K562 (cell line): ENCODE measurements at regions of chr1 and their contacts with region 1.

Region 1: DNA sequence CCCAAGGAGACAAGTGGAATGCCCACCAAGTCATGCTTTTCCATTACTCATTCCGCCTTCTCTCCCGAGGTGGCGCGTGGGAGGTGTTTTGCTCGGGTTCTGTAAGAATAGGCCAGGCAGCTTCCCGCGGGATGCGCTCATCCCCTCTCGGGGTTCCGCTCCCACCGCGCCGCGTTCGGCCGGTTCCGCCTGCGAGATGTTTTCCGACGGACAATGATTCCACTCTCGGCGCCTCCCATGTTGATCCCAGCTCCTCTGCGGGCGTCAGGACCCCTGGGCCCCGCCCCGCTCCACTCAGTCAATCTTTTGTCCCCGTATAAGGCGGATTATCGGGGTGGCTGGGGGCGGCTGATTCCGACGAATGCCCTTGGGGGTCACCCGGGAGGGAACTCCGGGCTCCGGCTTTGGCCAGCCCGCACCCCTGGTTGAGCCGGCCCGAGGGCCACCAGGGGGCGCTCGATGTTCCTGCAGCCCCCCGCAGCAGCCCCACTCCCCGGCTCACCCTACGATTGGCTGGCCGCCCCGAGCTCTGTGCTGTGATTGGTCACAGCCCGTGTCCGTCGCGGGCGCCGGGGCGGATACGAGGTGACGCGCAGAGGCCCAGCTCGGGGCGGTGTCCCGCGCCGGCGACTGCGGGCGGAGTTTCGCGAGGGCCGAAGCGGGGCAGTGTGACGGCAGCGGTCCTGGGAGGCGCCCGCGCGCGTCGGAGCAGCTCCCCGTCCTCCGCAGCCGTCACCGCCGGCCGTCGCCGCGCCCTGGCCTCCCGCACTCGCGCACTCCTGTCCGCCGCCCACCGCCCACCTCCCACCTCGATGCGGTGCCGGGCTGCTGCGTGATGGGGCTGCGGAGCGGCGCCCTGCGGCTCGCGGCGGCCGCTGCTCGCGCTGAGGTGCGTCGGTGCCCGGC is at the start of gene KIF1B:
- DNase-seq: peak; percentile 99 to 100 (median 100)
- ATAC-seq: peak; percentile 99
- H3K4me3 ChIP-seq: peak within 1 kb of the TSS; percentile 70
- H3K27ac ChIP-seq: peak within 1 kb of the TSS; percentile 73
- H3K4me1 ChIP-seq: peaks cover 17 to 23% of the 10 kb centered on the region in 2 experiments
- H3K27me3 ChIP-seq: peaks cover 0 to 17% of the 10 kb centered on the region in 2 experiments; a peak in 2 of 5 replicates
- CTCF ChIP-seq: peak; percentile 94 to 97 (median 96)
- EP300 ChIP-seq: no peak; the same call in none of the 2 replicates
- POLR2A ChIP-seq: peak; percentile 47
- RAD21 ChIP-seq: peak; percentile 79 to 85
- polyA plus RNA-seq, gene KIF1B: 2.8 to 3.1 TPM

Region 2: DNA sequence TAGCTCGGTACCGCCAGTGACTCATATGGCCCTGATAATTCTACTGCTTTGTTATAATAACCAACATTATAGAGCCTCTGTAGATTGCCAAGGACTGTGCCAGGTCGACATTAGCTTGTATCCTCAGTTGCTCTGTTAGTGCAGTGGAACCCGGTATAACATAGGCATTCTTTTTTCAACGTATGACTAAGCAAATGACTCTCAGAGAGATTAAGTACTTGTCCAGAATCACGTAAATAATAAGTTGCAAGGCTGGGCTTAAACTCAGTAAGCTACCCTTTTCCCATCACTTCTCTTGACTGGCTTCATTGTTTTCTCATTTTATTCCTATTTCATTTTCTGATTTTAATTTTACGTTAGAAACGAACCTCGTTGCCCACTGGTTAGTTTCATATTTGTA is 92.3 kb before region 1 on chr1:
- CTCF ChIA-PET with region 1: no interaction called
- POLR2A ChIA-PET with region 1: no interaction called
- in situ Hi-C with region 1: no loop called
- intact Hi-C with region 1: no loop called
- DNase-seq: no peak
- ATAC-seq: no peak
- H3K4me3 ChIP-seq: no peak overlapping the region
- H3K27ac ChIP-seq: no peak overlapping the region
- H3K4me1 ChIP-seq: no peaks in the 10 kb centered on the region
- H3K27me3 ChIP-seq: no peaks in the 10 kb centered on the region
- CTCF ChIP-seq: no peak
- EP300 ChIP-seq: no peak
- POLR2A ChIP-seq: no peak
- RAD21 ChIP-seq: no peak

Region 3: DNA sequence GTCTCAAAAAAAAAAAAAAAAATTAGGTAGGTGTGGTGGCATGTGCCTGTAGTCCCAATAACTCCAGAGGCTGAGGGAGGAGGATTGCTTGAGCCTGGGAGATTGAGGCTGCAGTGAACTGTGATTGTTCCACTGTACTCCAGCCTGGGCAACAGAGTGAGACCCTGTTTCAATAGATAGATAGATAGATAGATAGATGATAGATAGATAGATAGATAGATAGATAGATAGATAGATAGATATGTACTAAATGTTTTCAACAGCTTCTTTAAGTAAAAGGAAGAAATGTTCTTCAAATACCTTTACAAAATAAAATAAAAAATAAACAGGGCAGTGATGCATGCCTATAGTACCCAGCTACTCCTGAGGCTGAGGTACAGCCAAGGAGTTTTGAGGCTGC is 10.0 kb after region 1 on chr1:
- CTCF ChIA-PET with region 1: no interaction called
- POLR2A ChIA-PET with region 1: interaction called, 19 read pairs
- in situ Hi-C with region 1: no loop called
- intact Hi-C with region 1: no loop called
- DNase-seq: no peak
- ATAC-seq: no peak
- H3K4me3 ChIP-seq: no peak overlapping the region
- H3K27ac ChIP-seq: no peak overlapping the region
- H3K4me1 ChIP-seq: no peaks in the 10 kb centered on the region; a peak in 1 of 5 replicates
- H3K27me3 ChIP-seq: no peaks in the 10 kb centered on the region
- CTCF ChIP-seq: no peak
- EP300 ChIP-seq: no peak
- POLR2A ChIP-seq: no peak
- RAD21 ChIP-seq: no peak

Region 4: GRCh38 chr1:10225573-10225972 is 15.4 kb after region 1 on chr1:
- CTCF ChIA-PET with region 1: no interaction called
- POLR2A ChIA-PET with region 1: interaction called, 19 read pairs
- in situ Hi-C with region 1: no loop called
- intact Hi-C with region 1: no loop called
- DNase-seq: no peak
- ATAC-seq: no peak
- H3K4me3 ChIP-seq: no peak overlapping the region
- H3K27ac ChIP-seq: no peak overlapping the region
- H3K4me1 ChIP-seq: no peaks in the 10 kb centered on the region; a peak in 1 of 5 replicates
- H3K27me3 ChIP-seq: no peaks in the 10 kb centered on the region
- CTCF ChIP-seq: no peak
- EP300 ChIP-seq: no peak
- POLR2A ChIP-seq: no peak
- RAD21 ChIP-seq: no peak

Region 5: GRCh38 chr1:10324627-10325026 is 114.5 kb after region 1 on chr1:
- CTCF ChIA-PET with region 1: no interaction called
- POLR2A ChIA-PET with region 1: no interaction called
- in situ Hi-C with region 1: no loop called
- intact Hi-C with region 1: loop called (anchors 5 kb)
- DNase-seq: no peak
- ATAC-seq: no peak
- H3K4me3 ChIP-seq: no peak overlapping the region
- H3K27ac ChIP-seq: no peak overlapping the region
- H3K4me1 ChIP-seq: peaks cover 0 to 9% of the 10 kb centered on the region in 2 experiments; a peak in 2 of 5 replicates
- H3K27me3 ChIP-seq: no peaks in the 10 kb centered on the region
- CTCF ChIP-seq: no peak
- EP300 ChIP-seq: no peak
- POLR2A ChIP-seq: no peak
- RAD21 ChIP-seq: no peak

Region 6: DNA sequence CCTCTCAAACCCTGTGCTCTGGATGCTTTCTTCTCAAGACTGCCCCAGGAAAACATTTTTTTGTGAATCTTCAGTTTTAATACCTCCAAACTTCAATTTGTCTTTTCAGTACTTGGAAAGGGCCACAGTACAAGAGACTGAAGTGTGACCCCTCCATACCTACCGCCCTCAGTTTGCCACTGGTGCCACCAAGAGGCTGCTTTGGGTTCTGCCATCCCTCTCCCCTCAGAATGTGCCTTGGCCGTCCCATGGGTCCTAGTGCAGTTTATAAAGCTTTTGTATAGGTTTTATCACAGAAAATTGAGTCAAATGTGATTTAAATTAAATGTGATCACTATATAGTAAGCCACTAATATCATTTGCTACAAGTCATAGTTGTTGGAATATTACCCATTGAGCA is 127.9 kb after region 1 on chr1:
- CTCF ChIA-PET with region 1: no interaction called
- POLR2A ChIA-PET with region 1: no interaction called
- in situ Hi-C with region 1: no loop called
- intact Hi-C with region 1: loop called (anchors 1 kb)
- DNase-seq: peak; percentile 46 to 63 (median 60)
- ATAC-seq: peak; percentile 91
- H3K4me3 ChIP-seq: no peak overlapping the region
- H3K27ac ChIP-seq: no peak overlapping the region
- H3K4me1 ChIP-seq: peaks cover 0 to 9% of the 10 kb centered on the region in 2 experiments; a peak in 2 of 5 replicates
- H3K27me3 ChIP-seq: no peaks in the 10 kb centered on the region
- CTCF ChIP-seq: peak; percentile 78 to 86 (median 82)
- EP300 ChIP-seq: no peak
- POLR2A ChIP-seq: no peak
- RAD21 ChIP-seq: peak; percentile 47 to 73

Region 7: GRCh38 chr1:11882814-11883538 is 1672.8 kb after region 1 on chr1:
- CTCF ChIA-PET with region 1: no interaction called
- POLR2A ChIA-PET with region 1: no interaction called
- in situ Hi-C with region 1: no loop called
- intact Hi-C with region 1: no loop called
- DNase-seq: peak; percentile 98 to 99 (median 98)
- ATAC-seq: peak; percentile 94
- H3K4me3 ChIP-seq: no peak overlapping the region
- H3K27ac ChIP-seq: peak overlapping the region; percentile 82
- H3K4me1 ChIP-seq: peaks cover 48 to 70% of the 10 kb centered on the region in 2 experiments
- H3K27me3 ChIP-seq: no peaks in the 10 kb centered on the region
- CTCF ChIP-seq: no peak
- EP300 ChIP-seq: peak; percentile 93
- POLR2A ChIP-seq: peak; percentile 75
- RAD21 ChIP-seq: peak in 1 of 2 experiments; percentile 47; a peak in 2 of 4 replicates